MCF 10A (cell line): ENCODE measurements at regions of chr1 and their contacts with region 1.

Region 1: DNA sequence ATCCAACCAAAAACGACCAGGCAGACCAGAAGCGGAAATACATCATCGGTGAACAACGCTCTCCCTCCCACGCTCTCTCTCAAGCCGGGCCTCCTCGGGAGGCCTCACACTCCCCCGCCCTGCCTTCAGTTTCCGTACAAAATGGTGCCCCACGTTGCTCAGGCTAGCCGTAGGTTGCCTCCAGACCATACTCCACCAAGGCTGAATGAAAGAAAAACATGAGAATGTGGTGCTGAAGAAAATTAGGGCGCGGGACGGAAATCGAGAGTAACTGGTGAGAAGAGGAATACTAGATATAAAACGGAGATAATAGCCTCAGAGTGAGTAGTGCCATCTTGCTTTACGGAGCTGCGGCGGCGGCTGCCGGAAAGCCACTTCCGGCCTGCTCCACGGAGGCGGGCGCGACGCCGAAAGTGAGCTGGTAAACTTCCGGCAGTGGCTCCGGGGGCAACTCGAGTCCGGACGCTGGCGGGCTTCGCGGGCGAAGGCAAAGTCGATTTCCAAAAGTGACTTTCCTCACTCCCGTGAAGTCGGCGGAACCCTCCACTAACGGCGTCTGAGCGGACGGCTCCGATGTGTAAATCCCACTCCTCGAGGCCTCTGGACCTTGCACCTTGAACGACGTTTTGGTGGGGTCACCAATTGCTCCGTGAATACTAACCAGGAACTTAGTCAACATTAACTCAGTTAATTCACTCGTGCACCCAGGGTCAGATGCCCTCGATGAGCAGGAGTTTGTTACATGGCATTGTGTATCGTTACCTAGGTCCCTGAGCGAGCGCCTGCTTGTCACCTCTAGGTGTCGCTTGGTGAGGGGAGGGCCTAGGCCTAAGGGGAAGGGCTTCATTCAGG is at the start of gene SH3BP5L:
- DNase-seq: peak; percentile 100
- H3K4me3 Mint-ChIP-seq: peak within 1 kb of the TSS; percentile 78
- H3K27ac Mint-ChIP-seq: peak within 1 kb of the TSS; percentile 94
- H3K4me1 Mint-ChIP-seq: peaks cover 56% of the 10 kb centered on the region
- H3K27me3 Mint-ChIP-seq: no peaks in the 10 kb centered on the region
- CTCF ChIP-seq: peak; percentile 78
- total RNA-seq, gene SH3BP5L: 31.5 and 34.0 TPM in 2 replicates

Region 2: DNA sequence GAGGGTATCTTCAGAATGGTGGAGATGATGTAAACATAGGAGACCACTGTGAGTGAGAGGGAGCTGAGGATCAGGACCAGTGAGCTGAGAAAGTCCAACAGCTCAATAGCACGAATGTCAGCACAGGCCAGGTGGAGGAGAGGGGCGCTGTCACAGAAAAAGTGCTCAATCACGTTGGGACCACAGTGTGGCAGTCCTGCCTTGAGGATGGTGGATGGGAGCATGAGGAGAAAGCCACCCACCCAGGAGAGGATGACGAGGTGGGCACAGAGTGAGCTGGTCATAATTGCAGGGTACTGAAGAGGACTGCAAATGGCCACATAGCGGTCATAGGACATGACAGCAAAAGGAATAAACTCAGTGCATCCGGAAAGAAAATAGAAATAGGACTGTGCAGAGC is 992.5 kb before region 1 on chr1:
- CTCF ChIA-PET with region 1: no interaction called
- POLR2A ChIA-PET with region 1: no interaction called
- intact Hi-C with region 1: no loop called
- DNase-seq: no peak
- H3K4me3 Mint-ChIP-seq: no peak overlapping the region
- H3K27ac Mint-ChIP-seq: no peak overlapping the region
- H3K4me1 Mint-ChIP-seq: no peaks in the 10 kb centered on the region
- H3K27me3 Mint-ChIP-seq: no peaks in the 10 kb centered on the region
- CTCF ChIP-seq: no peak

Region 3: GRCh38 chr1:248688527-248689298 is 137.4 kb before region 1 on chr1:
- CTCF ChIA-PET with region 1: no interaction called
- POLR2A ChIA-PET with region 1: no interaction called
- intact Hi-C with region 1: no loop called
- DNase-seq: peak; percentile 54
- H3K4me3 Mint-ChIP-seq: no peak overlapping the region
- H3K27ac Mint-ChIP-seq: peak overlapping the region; percentile 82
- H3K4me1 Mint-ChIP-seq: peaks cover 29% of the 10 kb centered on the region
- H3K27me3 Mint-ChIP-seq: no peaks in the 10 kb centered on the region
- CTCF ChIP-seq: no peak

Region 4: DNA sequence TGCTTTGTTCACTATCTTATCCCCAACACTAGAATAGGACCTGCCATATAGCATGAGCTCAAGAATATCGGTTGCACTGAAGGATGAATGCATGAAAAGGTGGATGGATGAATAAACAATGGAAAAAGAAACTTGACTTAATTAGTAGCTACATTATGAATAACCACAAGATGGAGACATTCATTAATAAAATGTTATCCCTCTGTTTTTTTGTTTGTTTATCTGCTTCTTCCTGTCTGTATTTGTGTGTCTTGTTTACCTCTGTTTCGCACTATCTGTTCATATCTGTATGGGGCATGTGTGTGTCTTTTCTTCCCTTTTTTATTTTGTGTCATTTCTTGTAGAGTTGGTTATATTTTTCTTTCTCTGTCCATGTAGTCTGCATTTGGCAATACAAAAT is 122.5 kb before region 1 on chr1:
- CTCF ChIA-PET with region 1: interaction called, 34 read pairs
- POLR2A ChIA-PET with region 1: interaction called, 6 read pairs
- intact Hi-C with region 1: no loop called
- DNase-seq: no peak
- H3K4me3 Mint-ChIP-seq: no peak overlapping the region
- H3K27ac Mint-ChIP-seq: no peak overlapping the region
- H3K4me1 Mint-ChIP-seq: no peaks in the 10 kb centered on the region
- H3K27me3 Mint-ChIP-seq: no peaks in the 10 kb centered on the region
- CTCF ChIP-seq: peak; percentile 32

Region 5: DNA sequence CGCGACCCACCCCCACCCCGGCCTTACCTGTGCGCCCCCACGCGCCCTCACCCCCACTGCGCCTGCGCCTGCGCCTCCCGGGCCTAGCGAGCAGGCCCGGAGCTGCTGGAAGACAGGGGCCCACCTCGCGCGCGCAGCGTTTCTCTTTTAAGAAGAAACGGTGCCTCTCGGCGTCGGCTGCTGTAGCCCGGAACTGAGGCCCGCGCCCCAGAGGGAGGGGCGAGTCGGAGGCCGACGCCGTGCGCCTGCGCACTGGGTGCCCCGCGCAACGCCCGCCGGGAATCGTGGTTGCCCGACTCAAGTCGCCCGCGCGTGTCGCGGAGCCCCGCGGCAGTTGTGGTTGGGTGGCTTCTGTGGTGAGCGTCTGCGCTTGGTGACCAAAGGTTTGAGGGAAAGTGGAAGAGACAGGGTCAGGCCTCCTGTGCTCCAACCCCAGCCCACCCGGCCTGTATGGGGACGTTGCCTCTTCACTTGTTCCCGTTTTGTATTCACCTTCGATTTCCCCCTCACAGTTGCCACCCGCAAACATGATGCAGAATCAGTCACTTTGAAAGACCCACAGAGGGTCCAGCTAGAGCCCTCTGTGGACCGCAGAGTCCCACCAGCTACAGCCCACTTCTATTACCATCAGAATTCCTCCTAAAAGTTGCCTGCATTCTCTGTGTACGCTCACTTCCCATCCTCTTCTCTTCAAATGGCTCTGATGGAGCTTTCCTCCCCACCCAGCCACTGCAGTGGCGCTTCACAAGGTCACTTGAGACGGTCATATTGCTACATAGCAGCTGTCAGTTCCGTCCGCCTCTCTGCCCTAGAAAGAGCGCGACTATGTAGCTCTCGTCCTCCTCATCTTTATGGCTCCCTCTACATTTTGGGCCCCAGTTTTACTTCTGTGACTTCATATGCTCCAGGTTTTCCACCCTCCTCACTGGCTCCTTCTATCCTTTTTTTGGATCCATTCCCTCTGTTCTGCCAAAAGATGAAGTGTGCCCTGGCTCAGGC is 33.1 kb after region 1 on chr1 and contains the start of gene ZNF692:
- CTCF ChIA-PET with region 1: interaction called, 19 read pairs
- POLR2A ChIA-PET with region 1: interaction called, 84 read pairs
- intact Hi-C with region 1: loop called (anchors 1 kb)
- DNase-seq: peak; percentile 100
- H3K4me3 Mint-ChIP-seq: peak within 1 kb of the TSS; percentile 77
- H3K27ac Mint-ChIP-seq: peak within 1 kb of the TSS; percentile 70
- H3K4me1 Mint-ChIP-seq: peaks cover 31% of the 10 kb centered on the region
- H3K27me3 Mint-ChIP-seq: no peaks in the 10 kb centered on the region
- CTCF ChIP-seq: no peak
- total RNA-seq, gene ZNF692: 88.8 and 103 TPM in 2 replicates

Region 6: DNA sequence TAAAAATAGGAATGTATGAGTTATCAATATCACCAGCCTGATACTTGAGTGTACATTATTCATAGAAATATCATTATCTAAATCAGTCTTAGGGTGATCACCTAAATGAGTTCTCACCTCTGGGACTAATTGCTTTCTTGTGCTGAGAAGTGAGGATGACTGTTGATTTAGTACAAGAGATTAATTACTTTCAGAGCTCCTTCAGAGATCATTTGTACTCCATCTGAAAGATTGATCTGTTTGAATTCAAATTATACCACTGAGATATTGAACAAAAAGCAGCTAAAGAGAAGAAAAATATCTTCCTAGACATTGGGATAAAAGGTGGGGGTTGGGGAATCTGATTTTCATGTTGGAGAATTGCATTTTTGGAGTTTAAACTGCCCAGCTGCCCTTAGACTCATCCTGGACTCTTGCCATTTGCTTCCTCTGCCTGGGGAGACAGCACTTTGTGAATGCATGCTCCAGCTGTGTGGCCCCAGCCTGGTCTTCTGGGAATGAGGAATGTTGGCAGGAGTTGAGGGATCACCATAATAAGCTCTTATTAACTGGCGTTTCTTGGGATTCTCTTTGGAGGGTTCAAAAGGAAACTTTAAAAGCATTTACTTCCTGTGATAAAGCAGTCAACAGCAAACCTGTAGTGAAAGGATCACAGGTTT is 60.2 kb after region 1 on chr1:
- CTCF ChIA-PET with region 1: no interaction called
- POLR2A ChIA-PET with region 1: interaction called, 11 read pairs
- intact Hi-C with region 1: no loop called
- DNase-seq: no peak
- H3K4me3 Mint-ChIP-seq: no peak overlapping the region
- H3K27ac Mint-ChIP-seq: no peak overlapping the region
- H3K4me1 Mint-ChIP-seq: peaks cover 13% of the 10 kb centered on the region
- H3K27me3 Mint-ChIP-seq: peaks cover 20% of the 10 kb centered on the region
- CTCF ChIP-seq: no peak

Region 7: DNA sequence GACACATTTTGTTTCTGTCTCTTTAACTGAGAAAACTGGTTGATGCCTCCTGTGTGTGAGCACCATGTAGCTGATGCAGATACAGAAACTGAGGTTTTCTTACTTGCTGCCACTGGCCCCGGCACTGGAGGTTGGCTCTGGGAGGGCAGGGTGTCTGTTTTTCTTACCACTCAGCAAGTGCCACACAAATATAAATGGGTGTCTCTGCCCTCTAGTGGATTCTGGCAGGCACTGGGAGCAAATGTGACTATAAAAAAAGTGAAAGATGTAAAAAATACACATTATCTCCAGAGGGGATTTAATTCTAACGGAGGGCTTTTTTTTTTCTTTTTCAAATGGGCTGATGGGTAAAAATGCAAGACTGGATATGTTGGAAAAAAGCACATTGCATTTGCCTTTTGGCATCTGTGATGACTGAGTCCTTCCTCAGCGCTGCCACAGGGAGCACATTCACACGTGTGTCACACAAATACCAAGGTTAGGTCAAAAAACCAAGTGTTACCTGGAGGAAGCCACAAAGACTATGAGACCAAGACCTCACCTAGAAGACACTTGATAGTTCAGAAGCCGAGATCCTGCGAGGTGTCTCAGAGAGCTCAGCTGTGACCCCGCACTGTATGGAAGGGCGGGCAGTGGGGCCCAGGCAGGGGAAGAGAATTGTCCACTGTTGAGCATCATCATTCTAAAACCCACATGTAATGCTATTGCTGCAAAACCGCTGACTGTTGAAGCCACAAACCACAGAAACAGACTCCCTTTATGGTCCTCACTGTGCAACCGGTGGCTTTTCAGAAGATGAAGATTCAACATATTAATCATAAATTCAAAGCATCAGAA is 98.8 kb after region 1 on chr1:
- CTCF ChIA-PET with region 1: interaction called, 4 read pairs
- POLR2A ChIA-PET with region 1: interaction called, 5 read pairs
- intact Hi-C with region 1: loop called (anchors 1 kb)
- DNase-seq: peak; percentile 85
- H3K4me3 Mint-ChIP-seq: no peak overlapping the region
- H3K27ac Mint-ChIP-seq: no peak overlapping the region
- H3K4me1 Mint-ChIP-seq: peaks cover 20% of the 10 kb centered on the region
- H3K27me3 Mint-ChIP-seq: no peaks in the 10 kb centered on the region
- CTCF ChIP-seq: peak; percentile 89